ENCODE measurements at regions of chr18 and their contacts with region 1.

Region 1: GRCh38 chr18:59189746-59190145 is 30.2 kb upstream of the GRP start:
- DNase-seq: no peak
- H3K4me3 ChIP-seq: no peak overlapping the region
- CTCF ChIP-seq: no peak

Region 2: GRCh38 chr18:59200787-59201186 is 11.0 kb after region 1 on chr18:
- CTCF ChIA-PET with region 1: interaction called, 10 read pairs
- POLR2A ChIA-PET with region 1: no interaction called
- DNase-seq: no peak
- H3K4me3 ChIP-seq: no peak overlapping the region
- CTCF ChIP-seq: peak; percentile 48